H1 (cell line): ENCODE measurements at regions of chr4 and their contacts with region 1.

Region 1: GRCh38 chr4:183936574-183937345 is 31.7 kb downstream of the STOX2 start:
- DNase-seq: no peak
- H3K4me3 ChIP-seq: peak overlapping the region in 1 of 4 experiments; percentile 43; a peak in 1 of 8 replicates
- H3K27ac ChIP-seq: no peak overlapping the region
- H3K4me1 ChIP-seq: peaks cover 5 to 11% (median 8%) of the 10 kb centered on the region in 4 experiments; a peak in 5 of 7 replicates
- H3K27me3 ChIP-seq: no peaks in the 10 kb centered on the region
- CTCF ChIP-seq: no peak
- EP300 ChIP-seq: no peak
- POLR2A ChIP-seq: no peak
- RAD21 ChIP-seq: no peak

Region 2: DNA sequence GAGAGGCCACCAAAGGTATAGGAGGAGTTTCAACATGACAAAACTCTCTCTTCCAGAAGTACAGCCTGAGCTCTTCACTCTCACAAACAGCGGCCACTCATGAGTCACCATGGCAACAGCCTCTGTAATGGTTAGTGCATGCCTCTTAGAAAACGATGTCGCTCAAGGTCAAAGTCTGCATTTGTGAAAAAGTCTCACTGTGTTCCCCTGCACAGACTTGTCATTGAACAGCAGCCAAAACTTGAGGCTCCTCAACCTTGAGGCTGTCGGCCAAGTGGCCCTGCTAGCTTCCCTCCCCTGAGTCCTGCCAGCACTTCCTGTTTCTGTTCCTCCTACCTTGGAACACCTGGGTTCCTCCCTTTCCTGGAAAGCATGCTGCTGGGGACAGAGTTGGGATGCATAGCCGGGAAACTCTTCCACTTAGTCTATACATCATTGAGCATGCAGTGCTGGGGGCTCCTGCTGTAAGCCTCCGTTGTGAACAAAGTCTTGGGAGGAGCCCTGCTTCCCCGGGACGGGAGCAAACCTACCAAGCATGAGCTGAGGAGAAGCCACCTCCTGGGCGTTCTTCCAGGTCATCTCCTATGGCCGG is 365.3 kb before region 1 on chr4:
- CTCF ChIA-PET with region 1: no interaction called
- POLR2A ChIA-PET with region 1: no interaction called
- DNase-seq: no peak
- H3K4me3 ChIP-seq: no peak overlapping the region
- H3K27ac ChIP-seq: no peak overlapping the region
- H3K4me1 ChIP-seq: no peaks in the 10 kb centered on the region
- H3K27me3 ChIP-seq: no peaks in the 10 kb centered on the region
- CTCF ChIP-seq: no peak
- EP300 ChIP-seq: no peak
- POLR2A ChIP-seq: no peak
- RAD21 ChIP-seq: no peak

Region 3: DNA sequence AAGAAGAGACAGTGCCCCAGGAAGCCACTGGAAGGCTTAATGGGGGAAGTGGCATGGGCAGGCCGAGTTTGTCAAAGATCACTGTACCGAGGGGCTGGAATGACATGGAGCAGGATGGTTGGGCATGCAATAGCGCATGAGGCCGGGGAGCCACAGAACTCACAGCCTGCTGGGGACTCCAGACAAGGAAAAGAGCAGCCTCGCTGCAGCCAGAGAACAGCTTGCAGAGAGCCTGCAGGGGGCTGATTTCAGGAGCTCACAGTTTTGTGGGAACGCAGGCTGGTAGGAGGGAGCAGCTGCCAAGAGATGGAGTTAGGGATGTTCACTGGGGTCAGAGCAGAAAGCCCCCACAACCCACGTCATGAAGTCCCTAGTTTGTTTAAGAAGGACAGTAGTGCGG is 13.8 kb after region 1 on chr4:
- CTCF ChIA-PET with region 1: interaction called, 12 read pairs
- POLR2A ChIA-PET with region 1: interaction called, 3 read pairs
- DNase-seq: no peak
- H3K4me3 ChIP-seq: no peak overlapping the region
- H3K27ac ChIP-seq: no peak overlapping the region
- H3K4me1 ChIP-seq: peaks cover 0 to 3% (median 0%) of the 10 kb centered on the region in 4 experiments; a peak in 3 of 7 replicates
- H3K27me3 ChIP-seq: no peaks in the 10 kb centered on the region
- CTCF ChIP-seq: no peak
- EP300 ChIP-seq: no peak
- POLR2A ChIP-seq: no peak
- RAD21 ChIP-seq: no peak